PC-3 (cell line): ENCODE measurements at regions of chr7 and their contacts with region 1.

Region 1: DNA sequence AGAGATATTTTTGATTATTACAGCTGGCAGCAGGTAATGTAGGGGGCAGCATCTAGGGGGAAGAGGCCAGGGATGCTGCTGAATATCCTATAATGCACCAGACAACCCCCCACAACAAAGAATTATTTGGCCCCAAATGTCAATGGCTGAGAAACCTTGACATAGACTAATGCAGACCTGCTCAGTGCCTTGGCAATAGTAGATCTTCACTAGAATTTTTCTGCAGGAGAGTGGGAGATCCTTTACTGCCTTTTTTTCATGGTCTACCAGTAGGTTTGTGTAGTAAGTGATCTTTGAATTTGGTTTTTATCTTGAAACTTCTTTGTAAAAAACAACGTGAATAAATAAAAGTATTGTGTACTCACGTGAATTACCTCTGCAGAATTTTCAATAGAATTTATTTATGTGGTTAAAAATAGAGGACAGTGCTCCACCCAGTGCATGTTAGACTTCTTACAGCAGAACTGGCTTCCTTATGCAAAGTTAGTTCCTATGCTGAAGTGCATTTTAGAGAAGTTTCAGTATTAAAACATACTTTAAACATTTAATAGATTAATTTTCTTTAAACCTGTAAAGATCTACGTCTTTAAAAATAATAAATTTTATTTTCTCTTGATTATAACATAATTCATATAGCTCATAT is 199.6 kb upstream of the HDAC9 start:
- DNase-seq: no peak
- ATAC-seq: no peak
- H3K4me3 ChIP-seq: no peak overlapping the region
- H3K27ac ChIP-seq: 0 out of 2 replicates have a peak overlapping the region, but pooled peaks have one; percentile 13
- H3K4me1 ChIP-seq: 0 out of 2 replicates have a peak, but pooled peaks cover 10% of the 10 kb centered on the region
- H3K27me3 ChIP-seq: no peaks in the 10 kb centered on the region
- CTCF ChIP-seq: no peak

Region 2: DNA sequence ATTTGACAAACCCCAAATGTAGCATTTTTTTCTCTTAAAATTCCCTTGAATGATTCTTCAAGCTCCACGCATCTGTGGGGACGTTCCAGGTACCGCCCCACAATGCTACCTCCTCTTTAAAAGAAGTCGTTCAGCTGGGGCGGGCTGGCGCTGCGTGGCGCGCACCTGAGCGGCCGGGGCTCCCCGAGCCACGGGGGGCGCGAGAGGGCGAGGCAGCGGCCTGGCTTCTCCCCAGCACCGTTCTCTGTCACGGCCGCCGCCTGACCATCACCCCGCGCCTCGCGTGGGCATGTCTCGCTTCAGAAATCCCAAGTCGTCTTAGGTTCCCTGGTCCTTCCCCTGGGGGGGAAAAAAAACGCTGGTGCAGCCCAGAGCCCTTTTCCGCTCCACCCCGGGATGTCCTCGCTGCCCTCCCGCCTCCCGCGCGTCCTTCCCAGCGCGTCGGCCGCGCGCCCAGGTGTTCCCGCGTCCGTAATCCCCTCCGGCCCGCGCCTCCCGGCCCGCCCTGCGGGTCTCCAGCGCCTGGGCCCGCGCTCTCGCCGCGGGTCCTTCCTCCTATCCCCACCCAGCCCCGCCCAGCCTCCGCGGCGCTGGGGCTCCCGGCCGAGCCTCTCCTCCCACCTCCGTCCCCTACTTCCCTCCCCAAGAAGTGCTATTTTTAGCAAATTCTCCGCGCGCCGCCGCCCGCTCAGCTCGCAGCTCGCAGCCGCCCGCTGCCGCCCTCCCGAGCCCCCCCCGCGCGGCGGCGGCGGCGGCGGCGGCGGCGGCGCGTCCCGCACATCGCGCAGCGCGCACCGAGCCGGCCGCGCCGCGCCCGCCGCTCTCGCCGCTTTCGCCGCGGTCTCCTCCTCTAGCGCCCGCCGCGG is 209.5 kb before region 1 on chr7:
- CTCF ChIA-PET with region 1: no interaction called
- POLR2A ChIA-PET with region 1: no interaction called
- intact Hi-C with region 1: loop called (anchors 5 kb)
- DNase-seq: peak; percentile 36
- ATAC-seq: peak; percentile 68
- H3K4me3 ChIP-seq: peak overlapping the region; percentile 95
- H3K27ac ChIP-seq: no peak overlapping the region
- H3K4me1 ChIP-seq: no peaks in the 10 kb centered on the region; the same call in 1 of the 2 replicates
- H3K27me3 ChIP-seq: no peaks in the 10 kb centered on the region
- CTCF ChIP-seq: no peak; the same call in 1 of the 2 replicates

Region 3: DNA sequence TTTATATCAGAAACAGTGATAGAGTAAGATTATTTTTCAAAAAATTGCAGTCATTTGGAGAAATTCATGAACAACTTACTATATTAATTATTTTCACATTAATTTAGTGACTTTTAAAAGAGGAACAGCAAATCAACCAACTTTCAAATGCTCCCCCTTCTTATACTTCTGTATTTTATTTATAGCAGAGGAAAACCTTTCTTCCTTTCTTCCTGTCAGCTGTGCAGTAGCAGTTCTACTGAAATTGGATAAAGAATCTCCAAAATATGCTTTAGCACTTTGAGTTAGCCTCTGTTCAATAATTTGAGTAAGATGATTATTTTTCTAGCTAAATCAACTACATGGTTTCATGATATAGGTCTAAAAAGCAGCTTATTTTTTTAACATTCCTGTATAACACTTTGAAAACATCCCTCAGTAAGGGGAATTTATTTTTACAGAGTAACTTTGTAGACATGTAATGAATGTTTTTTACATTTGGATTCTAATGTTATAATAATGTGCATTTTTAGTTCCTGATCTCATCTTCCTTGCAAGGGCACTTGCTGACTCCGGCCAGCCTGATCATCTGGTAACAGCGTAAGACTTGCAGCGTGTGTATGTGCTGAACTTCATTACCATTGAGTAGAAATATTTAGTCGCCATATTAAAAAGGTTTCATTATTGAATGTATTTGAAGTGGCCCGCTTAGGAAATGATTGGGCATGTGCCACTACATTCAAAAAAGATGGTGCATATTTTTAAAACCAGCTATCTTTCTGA is 41.3 kb after region 1 on chr7:
- CTCF ChIA-PET with region 1: no interaction called
- POLR2A ChIA-PET with region 1: no interaction called
- intact Hi-C with region 1: loop called (anchors 5 kb)
- DNase-seq: no peak
- ATAC-seq: no peak
- H3K4me3 ChIP-seq: no peak overlapping the region
- H3K27ac ChIP-seq: no peak overlapping the region
- H3K4me1 ChIP-seq: no peaks in the 10 kb centered on the region
- H3K27me3 ChIP-seq: no peaks in the 10 kb centered on the region
- CTCF ChIP-seq: no peak

Region 4: DNA sequence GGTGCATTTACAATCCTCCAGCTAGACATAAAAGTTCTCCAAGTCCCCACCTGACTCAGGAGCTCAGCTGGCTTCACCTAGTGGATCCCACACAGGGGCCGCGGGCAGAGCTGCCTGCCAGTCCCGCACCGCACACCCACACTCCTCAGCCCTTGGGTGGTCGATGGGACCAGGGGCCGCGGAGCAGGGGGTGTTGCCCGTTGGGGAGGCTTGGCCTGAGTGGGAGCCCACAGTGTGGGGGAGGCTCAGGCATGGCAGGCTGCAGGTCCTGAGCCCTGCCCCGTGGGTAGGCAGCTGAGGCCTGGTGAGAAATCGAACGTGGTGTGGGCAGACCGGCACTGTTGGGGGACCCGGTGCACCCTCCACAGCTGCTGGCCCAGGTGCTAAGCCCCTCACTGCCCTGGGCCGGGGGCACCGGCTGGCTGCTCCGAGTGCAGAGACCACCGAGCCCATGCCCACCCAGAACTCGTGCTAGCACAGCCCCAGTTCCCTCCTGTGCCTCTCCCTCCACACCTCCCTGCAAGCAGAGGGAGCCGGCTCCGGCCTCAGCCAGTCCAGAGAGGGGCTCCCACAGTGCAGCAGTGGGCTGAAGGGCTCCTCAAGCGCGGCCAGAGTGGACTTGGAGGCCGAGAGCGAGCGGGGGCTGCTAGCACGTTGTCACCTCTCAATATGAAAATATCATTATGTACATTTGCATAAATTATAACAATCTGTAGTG is 1396.4 kb after region 1 on chr7:
- CTCF ChIA-PET with region 1: no interaction called
- POLR2A ChIA-PET with region 1: no interaction called
- intact Hi-C with region 1: no loop called
- DNase-seq: no peak
- ATAC-seq: no peak
- H3K4me3 ChIP-seq: no peak overlapping the region
- H3K27ac ChIP-seq: no peak overlapping the region
- H3K4me1 ChIP-seq: no peaks in the 10 kb centered on the region
- H3K27me3 ChIP-seq: no peaks in the 10 kb centered on the region
- CTCF ChIP-seq: no peak